Naive thymus-derived CD4-positive, alpha-beta T cell (primary cell): ENCODE measurements at regions of chr14 and their contacts with region 1.

Region 1: GRCh38 chr14:92612988-92613658 is 99.5 kb downstream of the RIN3 start:
- DNase-seq: peak; percentile 50 to 82 (median 63)
- ATAC-seq: peak; percentile 53
- H3K4me3 ChIP-seq: no peak overlapping the region
- H3K4me3 Mint-ChIP-seq: peak overlapping the region in 5 of 10 donors; percentile 15 to 50 (median 41)
- H3K27ac ChIP-seq: no peak overlapping the region
- H3K27ac Mint-ChIP-seq: peak overlapping the region in 8 of 9 donors; percentile 10 to 89 (median 52)
- H3K4me1 ChIP-seq: peaks cover 46 to 57% of the 10 kb centered on the region in 2 donors
- H3K4me1 Mint-ChIP-seq: peaks cover 53 to 77% (median 70%) of the 10 kb centered on the region in 7 donors
- H3K27me3 ChIP-seq: no peaks in the 10 kb centered on the region
- H3K27me3 Mint-ChIP-seq: no peaks in the 10 kb centered on the region

Region 2: GRCh38 chr14:92323011-92323915 is 289.9 kb before region 1 on chr14 and contains the start of gene SLC24A4:
- CTCF ChIA-PET with region 1: no interaction called
- POLR2A ChIA-PET with region 1: no interaction called
- intact Hi-C with region 1: no loop called
- DNase-seq: peak in 3 of 9 donors; percentile 3 to 30 (median 12)
- ATAC-seq: no peak
- H3K4me3 ChIP-seq: no peak within 1 kb of the TSS
- H3K4me3 Mint-ChIP-seq: peak within 1 kb of the TSS; percentile 53 to 82 (median 70)
- H3K27ac ChIP-seq: no peak within 1 kb of the TSS
- H3K27ac Mint-ChIP-seq: no peak within 1 kb of the TSS
- H3K4me1 ChIP-seq: no peaks in the 10 kb centered on the region
- H3K4me1 Mint-ChIP-seq: peaks cover 0 to 7% (median 3%) of the 10 kb centered on the region in 7 donors
- H3K27me3 ChIP-seq: no peaks in the 10 kb centered on the region
- H3K27me3 Mint-ChIP-seq: peaks cover 53 to 83% (median 67%) of the 10 kb centered on the region in 5 donors
- total RNA-seq, gene SLC24A4: 0.10 to 15.3 (median 2.1) TPM in 3 of 5 experiments, not detected in the others

Region 3: GRCh38 chr14:92644171-92644969 is 31.2 kb after region 1 on chr14:
- CTCF ChIA-PET with region 1: interaction called, 101 read pairs
- POLR2A ChIA-PET with region 1: interaction called, 341 read pairs
- intact Hi-C with region 1: no loop called
- DNase-seq: no peak
- ATAC-seq: no peak
- H3K4me3 ChIP-seq: no peak overlapping the region
- H3K4me3 Mint-ChIP-seq: peak overlapping the region in 2 of 10 donors; percentile 18 to 56
- H3K27ac ChIP-seq: no peak overlapping the region
- H3K27ac Mint-ChIP-seq: peak overlapping the region in 4 of 9 donors; percentile 17 to 99 (median 98)
- H3K4me1 ChIP-seq: peaks cover 7 to 47% of the 10 kb centered on the region in 2 donors
- H3K4me1 Mint-ChIP-seq: peaks cover 38 to 56% (median 42%) of the 10 kb centered on the region in 7 donors
- H3K27me3 ChIP-seq: no peaks in the 10 kb centered on the region
- H3K27me3 Mint-ChIP-seq: no peaks in the 10 kb centered on the region

Region 4: GRCh38 chr14:92670160-92670559 is 57.0 kb after region 1 on chr14:
- CTCF ChIA-PET with region 1: interaction called, 13 read pairs
- POLR2A ChIA-PET with region 1: interaction called, 15 read pairs
- intact Hi-C with region 1: no loop called
- DNase-seq: no peak
- ATAC-seq: peak; percentile 29
- H3K4me3 ChIP-seq: no peak overlapping the region
- H3K4me3 Mint-ChIP-seq: peak overlapping the region in 3 of 10 donors; percentile 14 to 36 (median 29)
- H3K27ac ChIP-seq: peak overlapping the region; percentile 39
- H3K27ac Mint-ChIP-seq: peak overlapping the region; percentile 35 to 91 (median 81)
- H3K4me1 ChIP-seq: peaks cover 0 to 37% of the 10 kb centered on the region in 2 donors
- H3K4me1 Mint-ChIP-seq: peaks cover 51 to 93% (median 82%) of the 10 kb centered on the region in 7 donors
- H3K27me3 ChIP-seq: no peaks in the 10 kb centered on the region
- H3K27me3 Mint-ChIP-seq: no peaks in the 10 kb centered on the region

Region 5: GRCh38 chr14:92680781-92681650 is 67.9 kb after region 1 on chr14:
- CTCF ChIA-PET with region 1: interaction called, 37 read pairs
- POLR2A ChIA-PET with region 1: interaction called, 9 read pairs
- intact Hi-C with region 1: loop called (anchors 1 kb)
- DNase-seq: peak; percentile 57 to 79 (median 73)
- ATAC-seq: peak; percentile 87
- H3K4me3 ChIP-seq: no peak overlapping the region
- H3K4me3 Mint-ChIP-seq: peak overlapping the region in 4 of 10 donors; percentile 8 to 36 (median 27)
- H3K27ac ChIP-seq: peak overlapping the region; percentile 63
- H3K27ac Mint-ChIP-seq: peak overlapping the region; percentile 34 to 95 (median 86)
- H3K4me1 ChIP-seq: peaks cover 19 to 24% of the 10 kb centered on the region in 2 donors
- H3K4me1 Mint-ChIP-seq: peaks cover 15 to 41% (median 26%) of the 10 kb centered on the region in 7 donors
- H3K27me3 ChIP-seq: no peaks in the 10 kb centered on the region
- H3K27me3 Mint-ChIP-seq: no peaks in the 10 kb centered on the region

Region 6: GRCh38 chr14:92783816-92784431 is 170.8 kb after region 1 on chr14:
- CTCF ChIA-PET with region 1: no interaction called
- POLR2A ChIA-PET with region 1: no interaction called
- intact Hi-C with region 1: loop called in 1 of 2 experiments (anchors 5 kb)
- DNase-seq: peak in 7 of 9 donors; percentile 31 to 65 (median 47)
- ATAC-seq: peak; percentile 81
- H3K4me3 ChIP-seq: no peak overlapping the region
- H3K4me3 Mint-ChIP-seq: no peak overlapping the region
- H3K27ac ChIP-seq: no peak overlapping the region
- H3K27ac Mint-ChIP-seq: no peak overlapping the region
- H3K4me1 ChIP-seq: no peaks in the 10 kb centered on the region
- H3K4me1 Mint-ChIP-seq: peaks cover 0 to 20% (median 0%) of the 10 kb centered on the region in 7 donors
- H3K27me3 ChIP-seq: no peaks in the 10 kb centered on the region
- H3K27me3 Mint-ChIP-seq: peaks cover 0 to 4% (median 0%) of the 10 kb centered on the region in 5 donors